Activated CD8-positive, alpha-beta T cell treated with anti-CD3 and anti-CD28 coated beads, Interleukin-2, amount 10 ng/mL, durations not matched to agents 7 days and 5 days (primary cell): ENCODE measurements at regions of chr2 and their contacts with region 1.

Region 1: GRCh38 chr2:204871231-204871953 is 326.1 kb downstream of the PARD3B start:
- DNase-seq: no peak
- ATAC-seq: peak; percentile 77
- H3K4me3 Mint-ChIP-seq: no peak overlapping the region
- H3K27ac Mint-ChIP-seq: no peak overlapping the region
- H3K4me1 Mint-ChIP-seq: peaks cover 39% of the 10 kb centered on the region
- H3K27me3 Mint-ChIP-seq: no peaks in the 10 kb centered on the region

Region 2: DNA sequence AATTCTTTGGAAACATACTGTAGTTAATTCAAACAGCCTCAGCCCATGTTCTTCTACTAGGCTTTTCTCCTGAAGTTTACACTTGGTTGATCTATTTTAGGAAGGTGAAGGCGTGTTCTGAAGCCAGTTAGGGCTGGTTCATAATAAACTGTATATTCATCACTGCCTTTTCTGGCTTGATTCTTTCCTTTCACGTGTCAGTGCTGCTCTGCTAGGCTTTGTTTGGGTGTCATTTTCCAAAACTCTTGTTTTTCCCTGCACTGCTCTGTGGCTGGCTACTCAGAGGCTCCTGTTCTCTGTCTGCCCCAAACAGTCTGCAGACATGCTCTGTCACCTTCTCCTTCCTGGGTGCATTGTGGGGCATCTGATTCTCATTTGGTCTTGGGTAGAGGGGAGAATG is 190.0 kb before region 1 on chr2:
- CTCF ChIA-PET with region 1: no interaction called
- POLR2A ChIA-PET with region 1: no interaction called
- DNase-seq: no peak
- ATAC-seq: no peak
- H3K4me3 Mint-ChIP-seq: no peak overlapping the region
- H3K27ac Mint-ChIP-seq: no peak overlapping the region
- H3K4me1 Mint-ChIP-seq: no peaks in the 10 kb centered on the region
- H3K27me3 Mint-ChIP-seq: no peaks in the 10 kb centered on the region

Region 3: GRCh38 chr2:204923957-204924356 is 52.6 kb after region 1 on chr2:
- CTCF ChIA-PET with region 1: no interaction called
- POLR2A ChIA-PET with region 1: no interaction called
- DNase-seq: no peak
- ATAC-seq: no peak
- H3K4me3 Mint-ChIP-seq: no peak overlapping the region
- H3K27ac Mint-ChIP-seq: no peak overlapping the region
- H3K4me1 Mint-ChIP-seq: no peaks in the 10 kb centered on the region
- H3K27me3 Mint-ChIP-seq: no peaks in the 10 kb centered on the region

Region 4: GRCh38 chr2:205130111-205130829 is 258.9 kb after region 1 on chr2:
- CTCF ChIA-PET with region 1: interaction called, 21 read pairs
- POLR2A ChIA-PET with region 1: no interaction called
- DNase-seq: peak; percentile 26
- ATAC-seq: peak; percentile 39
- H3K4me3 Mint-ChIP-seq: no peak overlapping the region
- H3K27ac Mint-ChIP-seq: peak overlapping the region; percentile 71
- H3K4me1 Mint-ChIP-seq: peaks cover 39% of the 10 kb centered on the region
- H3K27me3 Mint-ChIP-seq: no peaks in the 10 kb centered on the region

Region 5: GRCh38 chr2:205276081-205276777 is 404.8 kb after region 1 on chr2:
- CTCF ChIA-PET with region 1: no interaction called
- POLR2A ChIA-PET with region 1: no interaction called
- DNase-seq: no peak
- ATAC-seq: no peak
- H3K4me3 Mint-ChIP-seq: no peak overlapping the region
- H3K27ac Mint-ChIP-seq: no peak overlapping the region
- H3K4me1 Mint-ChIP-seq: no peaks in the 10 kb centered on the region
- H3K27me3 Mint-ChIP-seq: peaks cover 8% of the 10 kb centered on the region